Activated B cell treated with CpG ODN at 0.5 μM for 24 hours (primary cell): ENCODE measurements at regions of chr10 and their contacts with region 1.

Region 1: GRCh38 chr10:3043512-3044368 is 23.6 kb upstream of the PFKP start:
- DNase-seq: peak; percentile 34
- ATAC-seq: peak; percentile 76
- H3K4me3 Mint-ChIP-seq: no peak overlapping the region
- H3K27ac Mint-ChIP-seq: no peak overlapping the region
- H3K4me1 Mint-ChIP-seq: peaks cover 3% of the 10 kb centered on the region
- H3K27me3 Mint-ChIP-seq: peaks cover 17% of the 10 kb centered on the region
- CTCF ChIP-seq: no peak

Region 2: GRCh38 chr10:1301148-1301547 is 1742.6 kb before region 1 on chr10:
- CTCF ChIA-PET with region 1: no interaction called
- POLR2A ChIA-PET with region 1: no interaction called
- intact Hi-C with region 1: loop called (anchors 2 kb)
- DNase-seq: no peak
- ATAC-seq: no peak
- H3K4me3 Mint-ChIP-seq: no peak overlapping the region
- H3K27ac Mint-ChIP-seq: no peak overlapping the region
- H3K4me1 Mint-ChIP-seq: no peaks in the 10 kb centered on the region
- H3K27me3 Mint-ChIP-seq: peaks cover 12% of the 10 kb centered on the region
- CTCF ChIP-seq: no peak

Region 3: GRCh38 chr10:2839081-2839725 is 204.5 kb before region 1 on chr10:
- CTCF ChIA-PET with region 1: interaction called, 10 read pairs
- POLR2A ChIA-PET with region 1: no interaction called
- intact Hi-C with region 1: no loop called
- DNase-seq: no peak
- ATAC-seq: no peak
- H3K4me3 Mint-ChIP-seq: no peak overlapping the region
- H3K27ac Mint-ChIP-seq: no peak overlapping the region
- H3K4me1 Mint-ChIP-seq: no peaks in the 10 kb centered on the region
- H3K27me3 Mint-ChIP-seq: peaks cover 12% of the 10 kb centered on the region
- CTCF ChIP-seq: no peak

Region 4: DNA sequence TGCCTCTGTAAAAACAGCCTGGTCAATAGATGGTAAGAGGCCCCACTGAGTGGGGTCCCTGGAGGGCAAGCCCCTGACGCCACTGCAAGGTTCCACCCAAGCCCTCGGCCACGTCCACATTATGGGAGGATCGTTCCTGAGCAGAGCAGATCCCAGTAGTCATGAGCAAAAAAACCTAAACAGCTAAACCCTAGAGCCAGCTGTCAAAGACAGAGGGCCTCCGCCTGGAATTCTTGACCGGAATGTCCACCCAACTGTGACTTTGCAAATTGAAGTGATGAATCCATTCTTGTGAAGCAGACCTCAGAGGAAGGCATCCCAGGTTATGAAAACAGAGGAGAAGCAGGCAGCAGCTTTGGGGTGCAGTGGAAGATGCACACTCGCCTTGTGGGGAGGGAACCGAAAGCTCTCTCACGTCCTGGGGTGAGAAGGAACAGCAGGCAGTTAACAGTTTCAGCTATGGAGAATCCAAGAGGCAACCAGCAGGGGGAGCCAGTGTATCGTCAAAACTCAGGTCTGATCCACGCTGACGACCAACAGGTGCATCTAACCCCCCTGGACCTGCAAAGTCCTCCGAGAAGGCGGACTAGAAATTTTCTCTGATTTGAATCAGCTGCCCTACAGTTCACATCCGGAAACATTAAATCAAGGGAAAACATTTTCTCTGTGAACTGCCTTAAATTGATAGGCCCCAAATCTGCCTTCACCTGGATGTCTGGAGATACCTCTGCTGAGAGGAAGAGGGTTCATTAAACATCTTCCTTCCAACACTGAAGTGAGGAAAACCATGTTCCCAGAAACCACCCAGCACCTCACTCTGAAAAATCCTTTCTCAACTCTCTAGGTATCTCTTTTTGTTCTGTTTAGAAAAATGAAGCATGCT is 115.5 kb before region 1 on chr10:
- CTCF ChIA-PET with region 1: interaction called, 48 read pairs
- POLR2A ChIA-PET with region 1: no interaction called
- intact Hi-C with region 1: loop called (anchors 1 kb)
- DNase-seq: peak; percentile 32
- ATAC-seq: peak; percentile 66
- H3K4me3 Mint-ChIP-seq: no peak overlapping the region
- H3K27ac Mint-ChIP-seq: no peak overlapping the region
- H3K4me1 Mint-ChIP-seq: peaks cover 4% of the 10 kb centered on the region
- H3K27me3 Mint-ChIP-seq: peaks cover 13% of the 10 kb centered on the region
- CTCF ChIP-seq: no peak

Region 5: DNA sequence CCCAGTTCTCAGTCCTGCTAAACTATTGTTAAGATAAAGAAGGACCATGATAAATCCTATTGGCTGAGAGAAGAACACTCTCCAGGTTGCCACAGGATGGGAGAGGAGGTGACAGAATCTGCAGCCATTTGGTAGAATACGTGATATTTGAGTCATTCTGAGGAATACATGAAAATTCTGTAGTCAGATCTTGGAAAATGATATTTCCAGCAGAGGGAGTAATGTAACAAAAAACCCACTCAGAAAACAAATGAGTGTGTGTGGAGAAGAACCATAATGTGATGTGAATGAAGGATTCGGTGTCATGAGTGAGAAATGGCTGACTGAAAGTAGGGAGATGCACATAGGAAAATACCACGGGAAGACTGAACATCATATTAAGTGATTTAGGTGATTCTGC is 104.9 kb before region 1 on chr10:
- CTCF ChIA-PET with region 1: interaction called, 9 read pairs
- POLR2A ChIA-PET with region 1: no interaction called
- intact Hi-C with region 1: loop called (anchors 1 kb)
- DNase-seq: no peak
- ATAC-seq: no peak
- H3K4me3 Mint-ChIP-seq: no peak overlapping the region
- H3K27ac Mint-ChIP-seq: no peak overlapping the region
- H3K4me1 Mint-ChIP-seq: no peaks in the 10 kb centered on the region
- H3K27me3 Mint-ChIP-seq: peaks cover 24% of the 10 kb centered on the region
- CTCF ChIP-seq: no peak

Region 6: GRCh38 chr10:3330663-3331062 is 286.9 kb after region 1 on chr10:
- CTCF ChIA-PET with region 1: no interaction called
- POLR2A ChIA-PET with region 1: no interaction called
- intact Hi-C with region 1: no loop called
- DNase-seq: no peak
- ATAC-seq: no peak
- H3K4me3 Mint-ChIP-seq: no peak overlapping the region
- H3K27ac Mint-ChIP-seq: no peak overlapping the region
- H3K4me1 Mint-ChIP-seq: no peaks in the 10 kb centered on the region
- H3K27me3 Mint-ChIP-seq: no peaks in the 10 kb centered on the region
- CTCF ChIP-seq: no peak

Region 7: GRCh38 chr10:3570855-3571266 is 527.1 kb after region 1 on chr10:
- CTCF ChIA-PET with region 1: no interaction called
- POLR2A ChIA-PET with region 1: no interaction called
- intact Hi-C with region 1: no loop called
- DNase-seq: no peak
- ATAC-seq: no peak
- H3K4me3 Mint-ChIP-seq: no peak overlapping the region
- H3K27ac Mint-ChIP-seq: no peak overlapping the region
- H3K4me1 Mint-ChIP-seq: no peaks in the 10 kb centered on the region
- H3K27me3 Mint-ChIP-seq: no peaks in the 10 kb centered on the region
- CTCF ChIP-seq: no peak